Thyroid gland (tissue), 4 donors: ENCODE measurements at regions of chr1 and their contacts with region 1.

Region 1: DNA sequence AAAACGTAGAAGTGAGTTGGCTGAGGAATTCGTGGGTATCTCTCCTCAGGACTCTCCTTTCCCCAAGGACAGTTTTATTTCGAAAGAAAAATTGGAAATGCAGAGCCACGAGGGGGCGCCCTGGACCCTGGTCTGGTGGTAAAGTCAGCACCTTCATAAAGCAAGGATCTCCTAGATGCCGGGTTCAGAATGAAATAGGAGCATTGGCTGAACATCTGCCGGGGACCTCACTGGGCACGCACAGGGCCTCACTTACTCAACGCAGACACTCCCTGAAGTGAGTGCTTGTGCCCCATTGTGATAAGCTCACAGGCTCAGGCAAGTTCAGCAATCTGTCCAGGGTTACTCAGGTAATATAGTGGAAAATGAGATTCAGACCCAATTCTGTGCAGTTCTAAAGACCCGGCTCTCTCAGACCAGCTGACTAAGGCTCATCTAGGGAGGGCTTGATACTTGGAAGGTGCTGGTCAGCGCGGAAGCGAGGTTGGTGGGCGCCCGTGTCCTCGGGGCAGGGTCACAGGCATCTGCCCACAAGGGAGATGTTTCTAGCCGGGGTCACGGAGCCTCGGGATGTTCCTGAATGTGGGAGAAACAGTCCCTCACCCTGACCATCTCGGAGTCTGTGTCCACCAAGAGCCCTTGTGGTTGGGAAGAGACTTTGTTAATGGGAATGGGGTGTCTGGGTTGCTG is 55.7 kb upstream of the ETV3 start:
- DNase-seq: peak; percentile 71 to 82
- H3K4me3 ChIP-seq: no peak overlapping the region
- H3K27ac ChIP-seq: no peak overlapping the region
- H3K4me1 ChIP-seq: no peaks in the 10 kb centered on the region
- H3K27me3 ChIP-seq: no peaks in the 10 kb centered on the region
- CTCF ChIP-seq: peak; percentile 13 to 76 (median 52)
- POLR2A ChIP-seq: no peak

Region 2: DNA sequence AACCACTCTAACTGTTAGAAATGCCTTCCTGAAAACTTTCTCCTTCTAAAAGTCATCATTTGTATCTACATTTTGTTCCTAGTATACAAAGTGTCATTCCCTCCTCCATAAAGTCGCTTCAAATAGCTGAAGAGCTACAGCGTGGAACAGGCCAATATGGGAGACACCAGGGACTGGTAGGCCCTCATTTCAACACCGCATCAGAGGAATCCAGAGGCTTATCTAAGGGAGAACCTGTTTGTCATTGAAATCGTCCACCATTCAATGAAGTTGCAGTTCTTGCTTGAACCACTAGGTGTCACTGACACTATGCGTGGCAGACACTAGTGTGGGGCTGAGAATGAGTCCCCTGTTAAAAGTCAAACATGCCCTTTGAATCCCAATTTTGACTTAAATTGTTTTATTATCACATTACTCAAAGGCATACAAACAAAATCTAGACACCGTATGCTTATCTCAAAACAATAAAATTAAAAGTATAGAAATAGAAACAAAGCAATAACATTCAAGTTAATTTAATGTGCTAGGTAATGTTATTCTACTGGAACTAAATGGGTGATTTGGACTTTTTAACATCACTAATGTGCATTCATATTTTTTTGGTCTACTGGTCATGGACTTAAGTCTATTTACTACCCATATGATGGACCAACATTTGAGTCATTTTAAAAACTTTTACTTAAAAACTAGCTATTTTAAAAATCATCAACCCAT is 176.1 kb after region 1 on chr1:
- intact Hi-C with region 1: loop called (anchors 10 kb)
- DNase-seq: peak; percentile 28 to 31
- H3K4me3 ChIP-seq: no peak overlapping the region
- H3K27ac ChIP-seq: no peak overlapping the region
- H3K4me1 ChIP-seq: no peaks in the 10 kb centered on the region
- H3K27me3 ChIP-seq: no peaks in the 10 kb centered on the region
- CTCF ChIP-seq: peak; percentile 70 to 96 (median 76)
- POLR2A ChIP-seq: no peak

Region 3: DNA sequence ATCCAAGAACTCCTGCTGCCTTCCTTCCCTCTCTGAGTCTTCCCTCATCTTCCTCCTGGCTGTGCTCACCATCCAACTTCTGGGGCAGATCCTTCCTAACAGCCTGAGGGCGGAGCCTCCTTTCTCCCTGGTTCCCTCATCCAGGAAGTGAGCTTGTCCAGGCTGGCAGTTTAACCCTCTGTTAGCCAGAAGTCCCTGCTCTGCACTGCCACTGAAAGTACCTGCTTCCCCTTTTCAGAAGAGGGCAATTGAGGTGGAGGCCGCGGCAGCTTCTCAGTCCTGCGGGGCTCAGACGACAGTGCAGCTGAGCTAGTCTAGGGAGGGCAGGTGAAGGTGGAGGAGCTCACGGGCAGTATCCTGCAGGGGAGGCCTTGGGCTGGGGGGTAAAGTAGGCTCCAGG is 209.4 kb after region 1 on chr1:
- intact Hi-C with region 1: no loop called
- DNase-seq: no peak
- H3K4me3 ChIP-seq: no peak overlapping the region
- H3K27ac ChIP-seq: no peak overlapping the region
- H3K4me1 ChIP-seq: no peaks in the 10 kb centered on the region
- H3K27me3 ChIP-seq: no peaks in the 10 kb centered on the region
- CTCF ChIP-seq: no peak
- POLR2A ChIP-seq: no peak